ENCODE measurements at regions of chr5 and their contacts with region 1.

Region 1: GRCh38 chr5:174327317-174328236 is 282.1 kb downstream of the NSG2 start:
- DNase-seq: no peak
- H3K4me3 ChIP-seq: no peak overlapping the region
- CTCF ChIP-seq: peak; percentile 83

Region 2: DNA sequence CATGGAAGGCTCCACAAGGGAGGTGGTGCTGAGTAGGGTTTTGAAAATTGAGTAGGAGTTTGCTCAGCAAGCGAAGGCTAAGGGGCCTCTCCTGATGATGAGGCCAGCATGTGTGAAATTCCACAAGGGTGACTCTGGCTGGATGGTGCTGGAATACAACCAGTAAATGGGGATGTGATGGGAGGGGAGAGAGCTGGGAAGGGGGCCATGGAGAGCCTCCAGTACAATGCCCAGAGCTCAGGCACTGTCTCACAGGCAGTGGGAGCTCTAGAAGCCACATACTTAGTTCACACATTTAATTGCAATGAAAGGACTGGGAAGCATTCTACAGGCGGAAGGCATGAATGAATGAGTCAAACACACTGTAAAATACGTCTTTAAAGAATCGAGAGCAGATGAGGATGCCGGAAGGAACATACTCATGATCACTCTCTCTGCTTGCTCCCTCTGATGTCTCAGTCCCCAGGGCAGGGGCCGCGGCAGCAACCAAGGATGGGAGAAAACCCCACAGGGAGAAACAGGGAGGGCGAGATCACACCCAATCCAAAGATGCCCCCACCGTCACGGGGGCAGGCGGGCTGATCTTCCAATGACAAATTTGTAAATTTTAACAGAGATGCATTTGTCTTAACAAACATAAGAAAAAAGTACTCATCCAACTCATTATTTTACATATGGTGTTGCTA is 21.1 kb before region 1 on chr5:
- CTCF ChIA-PET with region 1: interaction called, 177 read pairs
- POLR2A ChIA-PET with region 1: no interaction called
- DNase-seq: no peak
- H3K4me3 ChIP-seq: no peak overlapping the region
- CTCF ChIP-seq: no peak

Region 3: DNA sequence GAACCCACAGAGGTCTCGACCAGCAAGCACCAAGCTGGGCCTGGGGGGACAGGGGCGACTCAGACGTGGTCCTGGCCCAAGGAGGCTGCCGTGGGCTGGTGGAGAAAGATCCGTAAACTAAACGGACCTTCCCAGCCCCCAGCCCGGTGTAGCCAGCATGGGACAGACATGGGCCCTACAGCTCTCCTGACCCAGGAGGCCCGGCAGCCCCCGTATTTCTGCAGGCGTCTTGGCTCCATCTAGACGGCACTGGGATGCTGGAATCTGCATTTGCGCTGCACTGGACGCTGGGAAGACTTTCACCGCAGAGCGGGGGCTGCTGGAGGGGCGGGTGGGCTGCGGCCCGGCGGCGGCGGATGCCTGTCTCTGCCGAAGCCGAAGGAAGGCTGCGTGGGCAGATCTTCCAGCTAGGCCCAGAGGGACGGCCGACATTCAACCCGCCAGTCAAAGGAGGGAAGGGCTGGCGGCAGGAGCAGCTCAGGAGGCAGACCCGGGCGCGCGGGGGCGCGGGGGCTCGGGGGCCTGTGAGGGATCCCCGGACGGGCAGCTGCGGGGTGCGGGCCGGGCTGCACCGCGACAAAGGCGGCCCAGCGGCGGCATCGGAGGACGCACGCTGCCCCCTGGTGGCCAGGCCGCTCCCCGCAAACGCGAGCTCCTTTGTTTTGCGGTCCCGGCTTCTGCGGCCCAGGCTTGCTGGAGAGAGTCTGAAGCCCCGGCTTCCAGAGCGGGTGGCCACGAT is 15.9 kb before region 1 on chr5:
- CTCF ChIA-PET with region 1: interaction called, 177 read pairs
- POLR2A ChIA-PET with region 1: no interaction called
- DNase-seq: no peak
- H3K4me3 ChIP-seq: peak overlapping the region; percentile 49
- CTCF ChIP-seq: peak; percentile 90

Region 4: DNA sequence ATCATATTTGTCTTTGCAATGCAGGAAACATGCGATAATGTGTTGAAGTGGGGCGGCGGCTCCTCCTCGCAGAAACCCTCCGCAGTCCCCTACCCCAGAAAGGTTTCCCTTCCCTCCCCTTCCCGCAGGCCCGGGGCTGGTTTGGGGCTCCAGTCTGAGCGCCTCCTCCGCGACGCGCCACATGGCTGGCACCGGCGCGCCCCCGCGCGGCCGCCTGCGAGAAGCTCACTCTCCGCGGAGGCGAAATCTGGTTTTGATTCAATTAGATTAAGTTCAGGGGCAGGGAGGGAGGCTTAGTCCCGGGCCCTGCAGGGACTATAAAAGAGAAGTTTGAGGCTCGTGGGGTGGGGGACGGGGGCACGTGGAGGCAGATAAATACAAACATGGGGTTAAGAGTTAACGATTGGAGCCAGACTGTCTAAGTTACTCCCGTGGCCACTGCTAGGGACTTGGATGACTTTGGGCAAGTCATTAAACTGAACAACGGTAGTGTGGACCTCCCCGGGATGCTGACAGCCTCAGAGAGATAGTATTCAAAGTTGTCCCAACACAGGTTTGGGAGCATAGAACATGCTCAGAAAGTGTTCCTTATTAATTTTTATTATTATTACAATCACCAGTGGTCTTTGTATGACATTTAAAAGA is 466.2 kb after region 1 on chr5:
- CTCF ChIA-PET with region 1: interaction called, 13 read pairs
- POLR2A ChIA-PET with region 1: no interaction called
- DNase-seq: no peak
- H3K4me3 ChIP-seq: no peak overlapping the region
- CTCF ChIP-seq: peak; percentile 94

Region 5: GRCh38 chr5:174935854-174936474 is 608.4 kb after region 1 on chr5:
- CTCF ChIA-PET with region 1: interaction called, 19 read pairs
- POLR2A ChIA-PET with region 1: no interaction called
- DNase-seq: no peak
- H3K4me3 ChIP-seq: no peak overlapping the region
- CTCF ChIP-seq: peak; percentile 91